Activated B cell treated with CpG ODN at 0.5 μM for 24 hours (primary cell): ENCODE measurements at regions of chr16 and their contacts with region 1.

Region 1: DNA sequence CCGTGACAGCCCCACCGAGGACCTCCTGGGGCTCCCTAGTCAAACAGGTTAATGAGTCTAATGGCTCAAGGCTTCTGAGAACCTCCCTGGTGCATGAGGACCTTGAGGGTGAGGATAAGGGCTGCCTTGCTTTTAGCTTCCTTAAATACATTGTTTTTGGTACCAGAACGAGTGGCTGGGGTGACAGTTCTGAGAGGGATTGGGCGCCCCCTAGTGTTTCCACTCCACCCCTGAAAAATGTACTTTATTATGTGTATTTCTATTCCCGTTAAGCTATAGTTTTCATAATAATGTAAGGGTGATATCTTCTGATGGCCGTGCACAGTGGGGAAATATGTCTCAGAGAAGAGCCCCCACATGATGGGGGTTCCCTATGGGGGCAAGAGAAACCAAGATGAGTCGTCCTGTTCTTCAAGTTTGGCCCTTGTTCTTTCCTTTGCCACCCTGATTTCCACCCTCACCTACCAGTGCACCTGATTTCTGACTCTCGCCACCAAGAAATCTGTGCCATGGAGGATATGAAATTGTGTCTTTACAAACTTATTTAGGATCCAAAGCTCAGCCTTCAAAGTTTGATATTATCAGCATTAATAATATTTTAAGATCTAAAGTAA is 14.5 kb upstream of the VWA3A start:
- DNase-seq: peak; percentile 49
- ATAC-seq: peak; percentile 60
- H3K4me3 Mint-ChIP-seq: no peak overlapping the region
- H3K27ac Mint-ChIP-seq: no peak overlapping the region
- H3K4me1 Mint-ChIP-seq: no peaks in the 10 kb centered on the region
- H3K27me3 Mint-ChIP-seq: no peaks in the 10 kb centered on the region
- CTCF ChIP-seq: peak; percentile 91

Region 2: GRCh38 chr16:21989133-21989532 is 88.7 kb before region 1 on chr16:
- CTCF ChIA-PET with region 1: interaction called, 19 read pairs
- POLR2A ChIA-PET with region 1: no interaction called
- intact Hi-C with region 1: no loop called
- DNase-seq: no peak
- ATAC-seq: no peak
- H3K4me3 Mint-ChIP-seq: no peak overlapping the region
- H3K27ac Mint-ChIP-seq: no peak overlapping the region
- H3K4me1 Mint-ChIP-seq: no peaks in the 10 kb centered on the region
- H3K27me3 Mint-ChIP-seq: no peaks in the 10 kb centered on the region
- CTCF ChIP-seq: no peak

Region 3: DNA sequence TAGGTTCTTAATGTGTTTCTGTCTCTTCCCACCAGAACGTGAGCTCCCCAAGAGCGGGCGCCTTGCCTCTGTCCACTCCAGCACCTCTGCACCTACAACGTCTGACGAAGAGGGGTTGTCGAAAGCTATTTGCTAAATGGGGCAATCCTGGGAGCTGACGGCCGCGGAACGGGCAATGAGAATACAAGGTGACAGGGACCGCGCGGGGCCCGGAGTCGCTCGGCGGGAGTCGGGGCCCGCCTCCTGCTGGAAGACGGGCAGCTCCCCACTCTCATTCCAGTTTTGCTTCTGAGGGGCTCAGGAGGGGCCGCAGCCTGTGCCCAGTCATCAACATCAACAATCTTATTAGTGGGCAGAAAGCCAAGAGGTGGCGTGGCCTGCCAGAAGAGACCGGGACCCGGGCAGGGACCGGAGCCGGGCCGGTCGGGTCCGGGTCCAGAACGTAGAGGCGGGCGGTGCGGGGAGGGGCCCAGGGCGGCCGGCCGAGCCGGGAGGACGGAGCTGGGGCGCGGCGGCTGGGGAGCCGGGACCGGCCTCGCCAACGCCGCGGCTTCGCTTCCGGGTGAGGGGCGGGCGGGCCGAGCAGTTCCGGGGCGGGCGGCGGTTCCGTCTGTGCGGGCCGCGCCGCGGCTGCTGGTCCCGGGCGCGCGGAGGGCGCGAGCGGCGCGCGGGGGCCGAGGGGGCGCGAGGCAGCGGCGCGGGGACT is 70.1 kb before region 1 on chr16 and contains the start of gene MOSMO:
- CTCF ChIA-PET with region 1: interaction called, 232 read pairs
- POLR2A ChIA-PET with region 1: interaction called, 8 read pairs
- intact Hi-C with region 1: no loop called
- DNase-seq: peak; percentile 69
- ATAC-seq: peak; percentile 90
- H3K4me3 Mint-ChIP-seq: peak within 1 kb of the TSS; percentile 89
- H3K27ac Mint-ChIP-seq: peak within 1 kb of the TSS; percentile 79
- H3K4me1 Mint-ChIP-seq: peaks cover 40% of the 10 kb centered on the region
- H3K27me3 Mint-ChIP-seq: no peaks in the 10 kb centered on the region
- CTCF ChIP-seq: no peak
- total RNA-seq, gene MOSMO: 14.3 and 21.3 TPM in 2 replicates

Region 4: DNA sequence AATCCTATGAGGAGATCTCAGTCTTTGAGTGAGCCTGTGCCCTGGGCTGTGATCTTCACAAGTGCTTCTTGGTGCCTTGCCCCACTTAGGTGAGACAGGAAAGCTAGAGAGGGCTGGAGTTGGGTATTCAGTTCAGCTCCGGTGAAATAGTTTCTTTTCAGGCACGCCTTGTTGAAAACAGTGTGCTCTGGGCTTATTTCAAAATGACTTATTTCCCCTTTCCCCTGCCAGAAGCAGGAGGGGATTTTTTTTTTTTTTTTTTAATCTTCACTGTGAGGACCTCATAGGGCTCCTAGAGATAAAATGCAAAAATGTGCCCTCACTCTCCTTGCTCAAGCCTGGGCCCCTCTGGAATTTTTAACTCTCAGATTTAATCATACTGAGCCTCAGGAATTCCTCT is 42.7 kb before region 1 on chr16:
- CTCF ChIA-PET with region 1: interaction called, 13 read pairs
- POLR2A ChIA-PET with region 1: interaction called, 3 read pairs
- intact Hi-C with region 1: no loop called
- DNase-seq: no peak
- ATAC-seq: peak; percentile 74
- H3K4me3 Mint-ChIP-seq: no peak overlapping the region
- H3K27ac Mint-ChIP-seq: peak overlapping the region; percentile 69
- H3K4me1 Mint-ChIP-seq: peaks cover 20% of the 10 kb centered on the region
- H3K27me3 Mint-ChIP-seq: no peaks in the 10 kb centered on the region
- CTCF ChIP-seq: no peak

Region 5: DNA sequence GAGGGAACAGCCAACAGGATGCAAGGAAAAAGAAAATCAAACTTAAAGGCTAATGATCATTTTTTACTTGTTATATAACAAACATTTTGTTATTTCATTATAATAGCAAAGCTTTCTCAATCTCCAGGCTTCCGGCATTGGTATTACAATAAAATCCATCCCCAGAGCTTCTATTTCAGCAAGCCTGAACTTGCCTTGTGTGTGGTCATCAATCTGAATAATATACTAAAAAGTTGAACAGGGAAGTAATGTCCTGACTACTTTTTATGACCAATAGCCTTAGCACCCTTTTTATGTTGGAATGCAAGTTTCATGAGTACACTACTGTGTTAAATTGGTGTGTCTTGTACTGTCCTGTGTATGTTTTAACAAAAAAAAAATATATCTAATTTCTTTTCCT is 12.6 kb before region 1 on chr16:
- CTCF ChIA-PET with region 1: interaction called, 13 read pairs
- POLR2A ChIA-PET with region 1: no interaction called
- intact Hi-C with region 1: no loop called
- DNase-seq: no peak
- ATAC-seq: no peak
- H3K4me3 Mint-ChIP-seq: no peak overlapping the region
- H3K27ac Mint-ChIP-seq: no peak overlapping the region
- H3K4me1 Mint-ChIP-seq: peaks cover 2% of the 10 kb centered on the region
- H3K27me3 Mint-ChIP-seq: no peaks in the 10 kb centered on the region
- CTCF ChIP-seq: no peak

Region 6: DNA sequence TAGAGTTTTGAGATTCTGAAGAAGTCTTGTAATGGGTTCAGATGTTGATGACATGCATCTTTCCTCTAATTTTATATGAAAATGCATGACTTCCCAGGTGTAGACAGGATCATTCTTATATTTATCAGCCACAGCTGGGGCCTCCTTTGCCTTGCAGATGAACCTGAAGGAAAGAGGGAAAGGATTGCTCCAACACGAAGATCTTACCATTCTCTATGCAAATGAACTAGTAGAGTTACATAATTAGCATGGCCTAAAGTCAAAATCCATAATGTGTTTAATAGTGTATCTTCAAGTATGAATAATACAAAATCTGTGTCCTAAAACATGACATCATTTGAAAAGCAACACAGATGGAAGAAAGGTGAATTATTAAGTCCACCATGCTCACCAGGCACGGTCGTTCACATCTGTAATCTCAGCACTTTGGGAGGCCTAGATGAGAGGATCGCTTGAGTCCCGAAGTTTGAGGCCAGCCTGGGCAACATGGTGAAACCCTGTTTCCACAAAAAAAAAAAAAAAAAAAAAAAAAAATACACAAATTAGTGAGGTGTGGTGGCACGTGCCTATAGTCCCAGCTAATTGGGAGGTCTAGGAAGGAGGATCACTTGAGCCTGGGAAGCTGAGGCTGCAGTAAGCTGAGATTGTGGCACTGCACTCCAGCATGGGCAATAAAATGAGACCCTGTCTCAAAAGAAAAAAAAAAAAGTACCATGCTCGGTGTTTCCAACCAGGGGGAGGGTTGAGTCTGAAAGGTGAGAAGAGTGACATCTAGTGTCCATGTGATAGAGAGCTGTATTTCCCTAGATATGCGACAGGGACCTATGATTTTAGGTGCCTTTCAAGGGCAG is 20.8 kb after region 1 on chr16:
- CTCF ChIA-PET with region 1: interaction called, 15 read pairs
- POLR2A ChIA-PET with region 1: no interaction called
- intact Hi-C with region 1: no loop called
- DNase-seq: no peak
- ATAC-seq: peak; percentile 58
- H3K4me3 Mint-ChIP-seq: no peak overlapping the region
- H3K27ac Mint-ChIP-seq: no peak overlapping the region
- H3K4me1 Mint-ChIP-seq: peaks cover 4% of the 10 kb centered on the region
- H3K27me3 Mint-ChIP-seq: peaks cover 17% of the 10 kb centered on the region
- CTCF ChIP-seq: no peak

Region 7: GRCh38 chr16:22307838-22308237 is 230.0 kb after region 1 on chr16:
- CTCF ChIA-PET with region 1: no interaction called
- POLR2A ChIA-PET with region 1: no interaction called
- intact Hi-C with region 1: no loop called
- DNase-seq: no peak
- ATAC-seq: no peak
- H3K4me3 Mint-ChIP-seq: no peak overlapping the region
- H3K27ac Mint-ChIP-seq: no peak overlapping the region
- H3K4me1 Mint-ChIP-seq: no peaks in the 10 kb centered on the region
- H3K27me3 Mint-ChIP-seq: no peaks in the 10 kb centered on the region
- CTCF ChIP-seq: no peak